AG04450 (cell line): ENCODE measurements at regions of chr5 and their contacts with region 1.

Region 1: DNA sequence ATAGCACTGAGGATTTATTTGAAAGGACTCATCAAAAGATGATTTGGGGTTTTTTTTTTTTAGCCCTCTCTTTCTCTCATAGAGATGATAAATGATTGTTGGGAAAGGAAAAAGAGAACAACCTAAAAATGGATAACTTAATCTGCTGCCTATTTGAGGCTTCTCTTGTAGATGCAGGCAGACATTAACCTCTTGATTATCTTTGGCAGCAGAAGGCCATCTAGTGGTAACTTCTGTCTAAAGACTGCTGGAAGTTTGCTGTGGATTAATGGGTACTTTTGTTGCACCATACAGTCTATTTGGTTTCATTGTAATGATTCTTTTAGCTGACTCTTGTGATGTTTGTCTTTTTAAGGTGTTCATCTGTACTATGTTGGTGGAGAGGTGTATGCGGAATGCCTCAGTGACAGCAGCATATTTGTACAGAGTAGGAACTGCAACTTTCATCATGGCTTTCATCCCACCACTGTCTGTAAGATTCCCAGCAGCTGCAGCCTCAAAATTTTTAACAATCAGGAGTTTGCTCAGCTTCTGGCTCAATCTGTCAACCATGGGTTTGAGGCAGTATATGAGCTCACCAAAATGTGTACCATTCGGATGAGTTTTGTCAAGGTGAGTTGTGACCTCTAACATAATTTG is 18.8 kb downstream of the SMIM32 start:
- DNase-seq: peak; percentile 32
- H3K4me3 ChIP-seq: no peak overlapping the region
- H3K27ac ChIP-seq: no peak overlapping the region
- H3K27me3 ChIP-seq: no peaks in the 10 kb centered on the region
- CTCF ChIP-seq: peak; percentile 81

Region 2: GRCh38 chr5:135887351-135887864 is 286.7 kb before region 1 on chr5:
- CTCF ChIA-PET with region 1: interaction called, 34 read pairs
- POLR2A ChIA-PET with region 1: no interaction called
- DNase-seq: peak; percentile 39
- H3K4me3 ChIP-seq: no peak overlapping the region
- H3K27ac ChIP-seq: no peak overlapping the region
- H3K27me3 ChIP-seq: peaks cover 15% of the 10 kb centered on the region
- CTCF ChIP-seq: peak; percentile 88

Region 3: GRCh38 chr5:135977375-135977928 is 196.7 kb before region 1 on chr5:
- CTCF ChIA-PET with region 1: no interaction called
- POLR2A ChIA-PET with region 1: no interaction called
- DNase-seq: no peak
- H3K4me3 ChIP-seq: no peak overlapping the region
- H3K27ac ChIP-seq: no peak overlapping the region
- H3K27me3 ChIP-seq: no peaks in the 10 kb centered on the region
- CTCF ChIP-seq: peak; percentile 43

Region 4: GRCh38 chr5:136080483-136081216 is 93.5 kb before region 1 on chr5:
- CTCF ChIA-PET with region 1: interaction called, 44 read pairs
- POLR2A ChIA-PET with region 1: no interaction called
- DNase-seq: peak; percentile 91
- H3K4me3 ChIP-seq: peak overlapping the region; percentile 62
- H3K27ac ChIP-seq: peak overlapping the region; percentile 84
- H3K27me3 ChIP-seq: no peaks in the 10 kb centered on the region
- CTCF ChIP-seq: no peak

Region 5: DNA sequence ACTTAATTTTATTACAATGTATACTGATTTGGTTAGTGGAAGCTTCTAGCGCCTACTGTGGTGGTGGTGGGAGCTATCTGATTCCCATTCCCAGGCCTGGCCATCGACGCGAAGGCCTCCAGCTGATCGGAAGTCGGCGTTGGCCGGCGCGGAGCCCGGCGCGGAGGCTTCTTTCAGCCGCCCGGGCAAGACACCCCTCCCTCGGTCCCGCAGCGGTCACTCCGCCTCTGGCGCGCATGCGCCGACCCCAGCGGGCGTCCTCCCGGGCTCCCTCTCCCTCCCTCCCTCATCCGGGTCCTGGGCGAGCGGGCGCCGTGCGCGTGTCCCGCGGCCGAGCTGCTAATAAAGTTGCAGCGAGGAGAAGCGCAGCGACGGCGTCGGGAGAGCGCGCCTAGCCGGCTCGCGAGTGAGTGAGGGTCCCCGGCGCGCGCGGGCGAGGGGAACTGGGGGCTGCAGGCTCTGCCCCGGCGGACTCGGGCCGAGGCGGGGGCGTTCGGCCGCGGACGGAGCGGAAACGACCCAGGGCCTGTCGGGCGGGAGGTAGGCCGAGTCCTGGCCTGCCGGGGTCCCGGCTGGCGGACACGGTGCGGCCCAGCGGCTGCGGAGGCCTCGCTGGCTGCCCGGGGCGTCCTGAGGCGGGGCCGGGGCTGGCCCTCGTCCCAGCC is 41.5 kb before region 1 on chr5 and contains the start of gene SMAD5:
- CTCF ChIA-PET with region 1: interaction called, 13 read pairs
- POLR2A ChIA-PET with region 1: no interaction called
- DNase-seq: peak; percentile 89
- H3K4me3 ChIP-seq: peak within 1 kb of the TSS; percentile 93
- H3K27ac ChIP-seq: peak within 1 kb of the TSS; percentile 82
- H3K27me3 ChIP-seq: peaks cover 9% of the 10 kb centered on the region
- CTCF ChIP-seq: no peak
- polyA plus RNA-seq, gene SMAD5: 66.1 and 98.3 TPM in 2 replicates

Region 6: DNA sequence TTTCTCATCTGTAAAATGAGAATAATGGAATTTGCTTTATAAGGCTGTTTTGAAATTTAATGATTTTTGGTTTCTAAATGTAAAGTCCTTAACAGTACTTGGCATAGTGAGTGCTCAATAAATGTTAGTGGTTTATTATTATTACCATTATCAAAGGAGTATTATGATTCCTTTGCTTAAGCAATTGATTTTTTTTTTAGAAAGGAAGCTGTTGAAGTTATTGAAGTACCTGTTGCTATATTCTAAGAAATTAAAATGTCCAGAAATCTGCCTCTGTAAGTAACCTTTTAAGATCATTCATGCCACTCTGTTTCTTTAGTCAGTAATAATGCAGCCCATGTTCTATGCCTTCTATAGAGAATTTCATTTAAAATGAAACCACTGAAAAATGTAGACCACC is 26.5 kb before region 1 on chr5:
- CTCF ChIA-PET with region 1: interaction called, 19 read pairs
- POLR2A ChIA-PET with region 1: no interaction called
- DNase-seq: no peak
- H3K4me3 ChIP-seq: no peak overlapping the region
- H3K27ac ChIP-seq: no peak overlapping the region
- H3K27me3 ChIP-seq: no peaks in the 10 kb centered on the region
- CTCF ChIP-seq: no peak

Region 7: DNA sequence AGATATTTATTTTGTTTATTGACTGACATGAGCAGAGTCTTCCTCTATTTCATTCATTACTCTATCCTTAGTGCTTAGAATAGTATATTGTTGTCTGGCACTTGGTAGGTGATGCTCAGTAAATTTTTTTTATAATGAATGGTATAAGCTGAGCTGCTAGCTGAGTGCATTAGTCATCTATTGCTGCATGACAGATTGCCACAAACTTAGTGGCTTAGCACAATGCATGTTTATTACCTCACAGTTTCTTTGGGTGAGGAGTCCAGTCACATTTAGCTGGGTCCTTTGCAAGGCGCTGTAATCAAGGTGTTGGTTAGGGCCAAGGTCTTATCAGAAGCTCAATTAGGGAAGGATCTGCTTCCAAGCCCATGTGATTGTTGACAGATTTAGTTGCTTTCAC is 18.4 kb before region 1 on chr5:
- CTCF ChIA-PET with region 1: interaction called, 15 read pairs
- POLR2A ChIA-PET with region 1: no interaction called
- DNase-seq: no peak
- H3K4me3 ChIP-seq: no peak overlapping the region
- H3K27ac ChIP-seq: no peak overlapping the region
- H3K27me3 ChIP-seq: no peaks in the 10 kb centered on the region
- CTCF ChIP-seq: no peak

Region 8: DNA sequence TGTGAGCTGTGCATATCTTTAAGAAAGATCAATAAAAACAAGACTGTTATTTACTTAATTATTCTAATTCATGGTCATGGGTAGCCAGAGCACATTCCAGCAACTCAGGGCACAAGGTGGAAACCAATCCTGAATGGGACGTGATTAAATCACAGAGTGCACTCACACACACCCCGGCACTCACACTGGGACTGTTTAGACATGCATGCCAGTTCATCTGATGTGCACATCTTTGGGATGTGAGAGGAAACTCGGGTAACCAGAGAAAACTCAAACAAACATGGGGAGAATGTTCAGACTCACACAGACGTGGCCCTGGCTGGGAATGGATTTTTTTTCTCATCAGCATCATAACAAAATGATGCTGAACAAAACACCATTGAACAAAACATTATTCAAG is 12.1 kb before region 1 on chr5:
- CTCF ChIA-PET with region 1: interaction called, 25 read pairs
- POLR2A ChIA-PET with region 1: no interaction called
- DNase-seq: no peak
- H3K4me3 ChIP-seq: no peak overlapping the region
- H3K27ac ChIP-seq: no peak overlapping the region
- H3K27me3 ChIP-seq: no peaks in the 10 kb centered on the region
- CTCF ChIP-seq: no peak